ENCODE measurements at regions of chr17 and their contacts with region 1.

Region 1: GRCh38 chr17:5031365-5032082 is 3.7 kb downstream of the SLC52A1 start:
- DNase-seq: peak; percentile 75
- ATAC-seq: peak; percentile 87
- H3K4me3 Mint-ChIP-seq: peak overlapping the region; percentile 82
- H3K27ac Mint-ChIP-seq: peak overlapping the region; percentile 71
- H3K4me1 Mint-ChIP-seq: peaks cover 14% of the 10 kb centered on the region
- H3K27me3 Mint-ChIP-seq: peaks cover 7% of the 10 kb centered on the region
- CTCF ChIP-seq: peak; percentile 47

Region 2: GRCh38 chr17:4980644-4981216 is 50.8 kb before region 1 on chr17:
- CTCF ChIA-PET with region 1: interaction called, 3 read pairs
- POLR2A ChIA-PET with region 1: interaction called, 3 read pairs
- intact Hi-C with region 1: loop called (anchors 1 kb)
- DNase-seq: no peak
- ATAC-seq: peak; percentile 68
- H3K4me3 Mint-ChIP-seq: peak overlapping the region; percentile 2
- H3K27ac Mint-ChIP-seq: peak overlapping the region; percentile 37
- H3K4me1 Mint-ChIP-seq: peaks cover 41% of the 10 kb centered on the region
- H3K27me3 Mint-ChIP-seq: no peaks in the 10 kb centered on the region
- CTCF ChIP-seq: peak; percentile 55

Region 3: DNA sequence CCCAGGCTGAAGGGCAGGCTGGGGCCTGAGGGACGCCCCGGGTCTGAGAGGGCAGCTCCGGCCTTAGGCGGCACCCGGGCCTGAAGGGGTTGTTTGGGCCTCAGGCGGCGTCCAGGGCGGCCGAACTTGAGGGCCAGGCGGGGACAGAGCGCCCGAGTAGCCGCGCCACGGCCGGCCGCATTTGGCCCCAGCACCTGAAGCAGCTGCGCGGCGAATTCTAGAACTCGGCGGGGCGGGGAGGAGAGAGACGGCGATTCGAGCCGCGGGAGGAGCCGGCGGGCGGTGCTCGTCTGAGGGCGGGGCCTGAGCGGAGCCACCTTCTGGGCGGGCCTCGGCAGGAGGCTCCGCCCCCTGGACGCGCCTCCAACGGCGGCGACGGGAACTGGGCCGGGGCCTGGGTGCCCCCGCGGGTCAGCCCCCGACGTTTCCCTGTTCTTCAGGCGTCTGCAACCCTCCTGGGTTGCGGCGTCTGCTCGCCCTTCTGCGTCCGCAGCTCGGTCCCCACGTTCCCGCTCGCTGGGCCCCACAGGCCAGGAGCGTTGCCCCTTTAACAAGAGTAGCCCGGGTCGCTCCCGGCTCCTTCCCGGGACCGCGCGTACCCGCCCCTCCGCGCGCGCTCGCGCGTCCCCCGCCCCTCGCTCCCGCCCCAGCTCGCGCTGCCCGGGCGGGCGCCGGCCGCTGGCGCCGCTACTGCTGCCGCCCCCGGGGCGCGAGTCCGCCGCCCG is 34.1 kb before region 1 on chr17 and contains the starts of genes INCA1 and KIF1C:
- CTCF ChIA-PET with region 1: no interaction called
- POLR2A ChIA-PET with region 1: interaction called, 5 read pairs
- intact Hi-C with region 1: loop called (anchors 1 kb)
- DNase-seq: peak; percentile 95
- ATAC-seq: peak; percentile 95
- H3K4me3 Mint-ChIP-seq: peak within 1 kb of the TSS; percentile 85
- H3K27ac Mint-ChIP-seq: peak within 1 kb of the TSS; percentile 90
- H3K4me1 Mint-ChIP-seq: peaks cover 20% of the 10 kb centered on the region
- H3K27me3 Mint-ChIP-seq: no peaks in the 10 kb centered on the region
- CTCF ChIP-seq: no peak
- total RNA-seq, gene INCA1: 0.17 and 0.44 TPM in 2 replicates
- total RNA-seq, gene KIF1C: 62.6 and 63.8 TPM in 2 replicates

Region 4: GRCh38 chr17:5047446-5047845 is 15.9 kb after region 1 on chr17:
- CTCF ChIA-PET with region 1: interaction called, 3 read pairs
- POLR2A ChIA-PET with region 1: interaction called, 9 read pairs
- intact Hi-C with region 1: loop called (anchors 2 kb)
- DNase-seq: no peak
- ATAC-seq: no peak
- H3K4me3 Mint-ChIP-seq: no peak overlapping the region
- H3K27ac Mint-ChIP-seq: peak overlapping the region; percentile 41
- H3K4me1 Mint-ChIP-seq: peaks cover 33% of the 10 kb centered on the region
- H3K27me3 Mint-ChIP-seq: no peaks in the 10 kb centered on the region
- CTCF ChIP-seq: no peak

Region 5: DNA sequence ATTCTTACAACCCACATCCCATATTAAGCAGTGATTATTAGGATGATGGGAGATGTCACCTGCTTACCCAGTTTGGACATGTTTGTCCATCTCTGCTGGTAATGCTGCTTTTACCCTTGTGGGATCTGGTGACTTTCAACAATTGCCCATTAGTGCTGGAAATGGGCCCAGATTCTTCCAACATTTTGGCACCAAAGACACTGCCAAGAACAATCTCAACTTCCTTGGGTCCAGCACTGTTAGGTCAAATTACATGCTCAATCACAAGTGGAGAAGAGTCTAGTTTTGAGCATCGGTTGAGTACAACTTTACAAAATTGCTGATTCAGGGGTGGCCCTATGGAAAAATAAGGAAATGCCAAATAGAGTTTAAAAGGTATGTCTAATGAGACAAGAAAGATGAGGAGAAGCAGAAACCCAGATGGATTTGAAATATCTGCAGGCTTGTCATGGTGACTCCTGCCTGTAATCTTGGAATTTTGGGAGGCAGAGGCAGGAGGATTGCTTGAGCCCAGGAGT is 33.8 kb after region 1 on chr17:
- CTCF ChIA-PET with region 1: interaction called, 58 read pairs
- POLR2A ChIA-PET with region 1: interaction called, 8 read pairs
- intact Hi-C with region 1: loop called (anchors 1 kb)
- DNase-seq: no peak
- ATAC-seq: no peak
- H3K4me3 Mint-ChIP-seq: no peak overlapping the region
- H3K27ac Mint-ChIP-seq: no peak overlapping the region
- H3K4me1 Mint-ChIP-seq: peaks cover 6% of the 10 kb centered on the region
- H3K27me3 Mint-ChIP-seq: peaks cover 5% of the 10 kb centered on the region
- CTCF ChIP-seq: no peak

Region 6: DNA sequence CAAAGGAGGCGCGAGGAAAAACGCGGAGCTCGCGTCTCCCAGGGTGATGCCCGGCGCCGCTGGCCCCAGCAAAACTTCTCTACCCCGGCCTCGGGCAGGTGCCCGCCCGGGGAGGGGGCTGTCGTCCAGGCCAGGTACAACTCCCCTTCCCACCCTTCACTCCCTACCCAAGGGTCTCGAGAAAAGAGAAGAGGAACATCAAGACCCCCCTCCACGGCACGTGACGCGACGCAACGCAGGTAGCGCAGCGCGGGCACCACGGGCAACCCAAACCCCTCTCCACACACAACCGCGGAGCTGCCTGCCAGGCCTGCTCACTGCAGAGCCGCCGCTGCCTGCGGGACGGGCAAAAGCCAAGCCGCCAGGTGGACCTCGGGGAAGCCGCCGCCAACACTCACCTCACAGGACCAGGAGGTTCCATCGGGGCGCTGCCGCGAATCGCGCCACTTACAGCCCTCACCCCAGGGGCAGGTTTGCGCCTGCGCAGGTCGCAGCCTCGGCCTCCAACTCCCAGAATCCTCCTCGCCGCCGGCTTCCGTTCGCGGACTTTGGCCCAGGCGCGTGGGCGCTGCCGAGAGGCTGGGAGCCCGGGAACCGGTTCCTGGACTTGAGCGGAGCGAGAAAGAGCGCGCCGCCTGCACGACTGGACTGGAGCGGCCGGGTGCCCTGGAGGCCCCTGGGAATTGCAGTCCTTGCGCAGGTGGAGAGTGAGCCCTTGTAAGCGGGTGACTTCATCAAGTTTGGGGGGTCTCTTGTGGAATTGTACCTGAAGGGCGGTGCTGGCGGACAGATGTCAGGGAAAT is 80.1 kb after region 1 on chr17 and contains the start of gene ZNF232:
- CTCF ChIA-PET with region 1: no interaction called
- POLR2A ChIA-PET with region 1: no interaction called
- intact Hi-C with region 1: loop called (anchors 5 kb)
- DNase-seq: peak; percentile 91
- ATAC-seq: peak; percentile 90
- H3K4me3 Mint-ChIP-seq: peak within 1 kb of the TSS; percentile 85
- H3K27ac Mint-ChIP-seq: peak within 1 kb of the TSS; percentile 79
- H3K4me1 Mint-ChIP-seq: peaks cover 27% of the 10 kb centered on the region
- H3K27me3 Mint-ChIP-seq: peaks cover 11% of the 10 kb centered on the region
- CTCF ChIP-seq: no peak
- total RNA-seq, gene ZNF232: 12.6 and 14.8 TPM in 2 replicates

Region 7: GRCh38 chr17:5122586-5123342 is 91.2 kb after region 1 on chr17:
- CTCF ChIA-PET with region 1: no interaction called
- POLR2A ChIA-PET with region 1: no interaction called
- intact Hi-C with region 1: no loop called
- DNase-seq: peak; percentile 29
- ATAC-seq: peak; percentile 65
- H3K4me3 Mint-ChIP-seq: peak overlapping the region; percentile 60
- H3K27ac Mint-ChIP-seq: no peak overlapping the region
- H3K4me1 Mint-ChIP-seq: peaks cover 7% of the 10 kb centered on the region
- H3K27me3 Mint-ChIP-seq: peaks cover 30% of the 10 kb centered on the region
- CTCF ChIP-seq: no peak

Region 8: GRCh38 chr17:5164436-5164835 is 132.9 kb after region 1 on chr17:
- CTCF ChIA-PET with region 1: no interaction called
- POLR2A ChIA-PET with region 1: no interaction called
- intact Hi-C with region 1: no loop called
- DNase-seq: no peak
- ATAC-seq: no peak
- H3K4me3 Mint-ChIP-seq: no peak overlapping the region
- H3K27ac Mint-ChIP-seq: no peak overlapping the region
- H3K4me1 Mint-ChIP-seq: peaks cover 34% of the 10 kb centered on the region
- H3K27me3 Mint-ChIP-seq: no peaks in the 10 kb centered on the region
- CTCF ChIP-seq: no peak